Activated CD4-positive, alpha-beta memory T cell treated with anti-CD3 and anti-CD28 coated beads, Interleukin-2, amount 10 ng/mL, durations not matched to agents 7 days and 5 days (primary cell): ENCODE measurements at regions of chr16 and their contacts with region 1.

Region 1: DNA sequence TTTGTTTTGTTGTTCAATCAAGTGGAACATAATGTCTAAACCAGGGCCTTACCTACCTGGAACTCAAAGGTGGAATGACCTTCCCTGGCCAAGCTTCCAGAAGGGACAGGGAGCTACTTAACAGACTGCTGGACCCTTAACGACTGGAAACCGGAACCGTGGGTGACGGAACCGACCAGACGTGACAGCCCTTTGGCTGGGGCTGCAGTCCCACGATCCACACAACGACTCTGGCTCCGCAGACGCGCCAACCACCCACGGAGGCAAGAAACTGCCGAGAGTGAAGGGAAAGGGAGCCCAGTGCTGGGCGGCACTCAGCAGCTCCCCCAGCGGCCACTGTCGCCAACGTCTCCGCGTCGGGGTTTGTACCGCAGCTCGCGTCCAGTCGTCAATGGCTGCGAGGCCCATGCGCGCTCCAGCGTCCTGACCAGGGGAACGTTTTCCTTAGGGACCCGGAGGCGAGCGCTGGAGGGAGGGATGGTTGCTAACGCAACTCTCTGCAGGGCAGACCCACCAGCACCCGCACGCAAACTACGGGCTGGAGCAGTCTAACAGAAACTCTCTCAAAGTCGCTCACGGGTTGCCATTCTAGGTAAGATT is 5.5 kb upstream of the KIF22 start:
- DNase-seq: peak; percentile 81
- H3K4me3 Mint-ChIP-seq: peak overlapping the region; percentile 29
- H3K27ac Mint-ChIP-seq: no peak overlapping the region
- H3K4me1 Mint-ChIP-seq: peaks cover 32% of the 10 kb centered on the region
- H3K27me3 Mint-ChIP-seq: peaks cover 14% of the 10 kb centered on the region

Region 2: GRCh38 chr16:29729116-29729521 is 55.9 kb before region 1 on chr16:
- CTCF ChIA-PET with region 1: interaction called, 10 read pairs
- POLR2A ChIA-PET with region 1: interaction called, 8 read pairs
- DNase-seq: no peak
- H3K4me3 Mint-ChIP-seq: no peak overlapping the region
- H3K27ac Mint-ChIP-seq: no peak overlapping the region
- H3K4me1 Mint-ChIP-seq: peaks cover 30% of the 10 kb centered on the region
- H3K27me3 Mint-ChIP-seq: peaks cover 16% of the 10 kb centered on the region

Region 3: DNA sequence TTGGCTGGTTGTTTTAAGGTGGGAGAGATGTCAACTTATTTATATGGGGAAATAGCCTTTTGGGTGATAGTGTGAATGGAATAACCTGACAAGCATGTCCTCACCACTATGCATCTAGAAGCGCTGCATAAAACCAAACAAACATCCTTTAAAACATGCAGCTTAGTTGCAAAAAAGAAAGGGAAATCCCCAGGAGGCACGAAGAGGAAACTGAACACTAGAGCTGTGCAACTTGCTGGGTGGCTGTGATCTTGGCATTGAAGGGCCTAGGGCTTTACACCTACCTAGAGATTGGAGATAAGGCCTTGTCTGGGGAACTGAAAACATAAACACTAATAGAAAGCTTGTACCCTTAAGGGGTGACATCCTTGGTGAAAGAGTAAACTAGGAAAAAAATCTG is 46.5 kb before region 1 on chr16:
- CTCF ChIA-PET with region 1: interaction called, 12 read pairs
- POLR2A ChIA-PET with region 1: interaction called, 27 read pairs
- DNase-seq: peak; percentile 56
- H3K4me3 Mint-ChIP-seq: no peak overlapping the region
- H3K27ac Mint-ChIP-seq: peak overlapping the region; percentile 74
- H3K4me1 Mint-ChIP-seq: peaks cover 68% of the 10 kb centered on the region
- H3K27me3 Mint-ChIP-seq: no peaks in the 10 kb centered on the region

Region 4: DNA sequence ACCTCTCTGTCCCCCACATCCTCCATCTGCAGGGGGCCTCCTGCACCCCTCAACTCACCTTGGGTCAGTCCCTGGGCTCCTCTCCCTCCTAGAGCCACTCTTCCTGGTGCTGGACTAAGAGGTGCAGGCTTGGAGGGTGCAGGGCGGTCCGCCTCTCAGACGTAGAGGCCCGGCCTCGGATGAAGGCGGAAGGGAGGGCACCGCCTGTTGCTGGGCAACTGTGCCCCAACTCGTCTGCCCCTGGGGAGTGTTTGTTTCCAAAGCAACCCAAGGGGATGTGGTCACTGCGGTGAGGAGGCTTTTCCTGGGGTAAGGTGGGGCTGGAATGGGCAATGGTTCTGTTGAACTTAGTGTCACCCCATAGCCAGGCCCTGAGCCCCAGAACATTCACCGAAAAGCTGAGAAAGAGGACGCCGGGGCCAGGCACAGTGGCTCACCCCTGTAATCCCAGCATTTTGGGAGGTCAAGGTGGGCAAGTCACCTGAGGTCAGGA is 39.1 kb before region 1 on chr16 and contains the start of gene C16orf54:
- CTCF ChIA-PET with region 1: interaction called, 16 read pairs
- POLR2A ChIA-PET with region 1: interaction called, 45 read pairs
- DNase-seq: peak; percentile 98
- H3K4me3 Mint-ChIP-seq: peak within 1 kb of the TSS; percentile 98
- H3K27ac Mint-ChIP-seq: peak within 1 kb of the TSS; percentile 93
- H3K4me1 Mint-ChIP-seq: peaks cover 67% of the 10 kb centered on the region
- H3K27me3 Mint-ChIP-seq: no peaks in the 10 kb centered on the region
- total RNA-seq, gene C16orf54: 94.6 to 99.2 TPM

Region 5: DNA sequence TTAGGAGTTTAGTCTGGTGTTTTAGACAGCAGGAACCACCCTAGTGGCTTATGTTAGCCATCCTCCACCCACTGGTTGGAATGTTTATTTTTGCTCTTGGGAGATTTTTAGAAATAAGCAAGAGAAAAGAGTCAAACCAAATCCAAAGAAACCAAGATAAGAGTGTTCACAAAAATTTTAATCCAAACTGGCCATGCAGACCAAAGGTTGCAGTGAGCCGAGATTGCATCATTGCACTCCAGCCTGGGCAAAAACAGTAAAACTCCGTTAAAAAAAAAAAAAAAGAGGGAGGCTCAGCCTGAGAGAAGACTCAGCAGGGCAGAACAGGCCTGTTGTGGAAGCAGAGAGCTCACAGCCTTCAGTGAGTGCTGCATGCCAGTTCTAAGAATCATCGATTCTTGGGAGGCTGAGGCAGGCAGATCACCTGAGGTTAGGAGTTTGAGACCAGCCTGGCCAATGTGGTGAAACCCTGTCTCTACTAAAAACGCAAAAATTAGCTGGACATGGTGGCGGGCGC is 27.0 kb before region 1 on chr16:
- CTCF ChIA-PET with region 1: interaction called, 12 read pairs
- POLR2A ChIA-PET with region 1: interaction called, 8 read pairs
- DNase-seq: no peak
- H3K4me3 Mint-ChIP-seq: no peak overlapping the region
- H3K27ac Mint-ChIP-seq: no peak overlapping the region
- H3K4me1 Mint-ChIP-seq: peaks cover 19% of the 10 kb centered on the region
- H3K27me3 Mint-ChIP-seq: no peaks in the 10 kb centered on the region

Region 6: GRCh38 chr16:29815793-29816693 is 31.0 kb after region 1 on chr16 and contains the start of gene PAGR1:
- CTCF ChIA-PET with region 1: interaction called, 22 read pairs
- POLR2A ChIA-PET with region 1: interaction called, 29 read pairs
- DNase-seq: peak; percentile 99
- H3K4me3 Mint-ChIP-seq: peak within 1 kb of the TSS; percentile 94
- H3K27ac Mint-ChIP-seq: peak within 1 kb of the TSS; percentile 94
- H3K4me1 Mint-ChIP-seq: peaks cover 72% of the 10 kb centered on the region
- H3K27me3 Mint-ChIP-seq: peaks cover 11% of the 10 kb centered on the region
- total RNA-seq, gene PAGR1: 26.6 to 28.4 TPM